Right lobe of liver (tissue), 6 donors: ENCODE measurements at regions of chr15 and their contacts with region 1.

Region 1: DNA sequence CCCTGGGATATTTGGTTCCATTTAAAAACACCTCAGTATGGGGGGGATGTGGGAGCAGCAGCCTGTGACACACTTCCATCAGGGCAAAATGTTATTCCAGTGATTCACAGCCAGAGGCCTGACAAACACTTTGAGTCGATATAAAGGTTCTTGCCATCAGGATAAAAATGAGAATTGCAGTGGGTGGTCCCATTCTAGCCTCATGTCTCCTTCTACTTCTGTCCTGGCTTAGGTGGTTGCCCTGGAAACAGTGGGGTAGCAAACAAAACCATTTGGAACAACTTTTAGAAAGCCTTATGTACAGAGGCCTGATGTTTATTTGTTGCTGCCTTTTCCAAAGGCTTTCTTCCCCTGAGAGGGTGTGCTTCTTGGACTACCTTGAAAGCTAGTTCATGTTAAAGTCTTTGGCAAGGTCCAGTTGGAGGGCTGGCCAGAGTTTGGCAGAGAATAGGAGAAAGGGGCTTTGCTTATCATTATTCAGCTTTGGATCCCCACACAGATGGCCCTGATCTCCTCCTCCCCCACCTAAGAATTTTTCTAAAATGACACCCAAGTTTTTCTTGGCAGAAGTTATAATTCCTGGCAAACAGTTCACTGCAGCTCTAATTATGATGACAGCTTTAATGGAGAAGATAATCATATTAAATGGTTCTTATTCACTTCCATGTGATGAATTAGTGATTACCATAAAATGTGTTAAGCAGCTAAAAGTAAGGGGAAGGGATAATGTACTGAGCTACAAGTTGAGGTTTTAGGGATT is 84.2 kb upstream of the ZNF280D start:
- DNase-seq: no peak
- ATAC-seq: no peak
- H3K4me3 ChIP-seq: no peak overlapping the region
- H3K27ac ChIP-seq: no peak overlapping the region
- H3K4me1 ChIP-seq: peaks cover 0 to 1% (median 0%) of the 10 kb centered on the region in 4 donors
- H3K27me3 ChIP-seq: no peaks in the 10 kb centered on the region
- CTCF ChIP-seq: no peak
- POLR2A ChIP-seq: no peak

Region 2: GRCh38 chr15:56019060-56019793 is 798.3 kb before region 1 on chr15:
- intact Hi-C with region 1: no loop called
- DNase-seq: no peak
- ATAC-seq: no peak
- H3K4me3 ChIP-seq: no peak overlapping the region
- H3K27ac ChIP-seq: no peak overlapping the region
- H3K4me1 ChIP-seq: no peaks in the 10 kb centered on the region
- H3K27me3 ChIP-seq: no peaks in the 10 kb centered on the region
- CTCF ChIP-seq: no peak
- POLR2A ChIP-seq: no peak

Region 3: GRCh38 chr15:56491110-56491722 is 326.3 kb before region 1 on chr15:
- intact Hi-C with region 1: loop called in 1 of 2 experiments (anchors 10 kb)
- DNase-seq: peak in 2 of 3 donors; percentile 56 to 68
- ATAC-seq: peak; percentile 89 to 94 (median 90)
- H3K4me3 ChIP-seq: no peak overlapping the region
- H3K27ac ChIP-seq: no peak overlapping the region
- H3K4me1 ChIP-seq: no peaks in the 10 kb centered on the region
- H3K27me3 ChIP-seq: no peaks in the 10 kb centered on the region
- CTCF ChIP-seq: peak; percentile 62 to 91 (median 88)
- POLR2A ChIP-seq: no peak

Region 4: DNA sequence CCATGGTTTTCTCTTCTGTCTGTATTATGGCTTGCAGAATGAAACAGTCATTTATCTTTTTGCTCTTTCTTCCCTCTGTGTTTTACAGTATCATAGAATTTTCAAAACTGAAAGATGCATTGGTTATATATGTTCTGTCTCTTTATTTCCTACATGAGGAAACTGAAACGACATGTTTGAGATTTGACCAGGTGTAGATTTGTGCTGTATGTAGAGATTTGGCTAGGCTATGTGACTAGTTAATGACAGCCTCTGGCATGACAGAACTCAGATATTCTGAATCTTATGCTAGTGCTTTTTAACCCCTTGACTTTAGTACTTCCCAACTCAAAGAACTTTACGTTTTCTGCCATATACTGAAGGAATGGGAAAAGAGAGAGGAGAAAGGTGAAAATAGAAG is 251.9 kb after region 1 on chr15:
- intact Hi-C with region 1: no loop called
- DNase-seq: no peak
- ATAC-seq: no peak
- H3K4me3 ChIP-seq: no peak overlapping the region
- H3K27ac ChIP-seq: no peak overlapping the region
- H3K4me1 ChIP-seq: no peaks in the 10 kb centered on the region
- H3K27me3 ChIP-seq: no peaks in the 10 kb centered on the region
- CTCF ChIP-seq: no peak
- POLR2A ChIP-seq: no peak

Region 5: GRCh38 chr15:57312318-57313133 is 495.0 kb after region 1 on chr15:
- intact Hi-C with region 1: loop called in 1 of 2 experiments (anchors 10 kb)
- DNase-seq: peak in 1 of 3 donors; percentile 35
- ATAC-seq: no peak
- H3K4me3 ChIP-seq: no peak overlapping the region
- H3K27ac ChIP-seq: no peak overlapping the region
- H3K4me1 ChIP-seq: peaks cover 0 to 3% (median under 1%) of the 10 kb centered on the region in 4 donors
- H3K27me3 ChIP-seq: no peaks in the 10 kb centered on the region
- CTCF ChIP-seq: no peak
- POLR2A ChIP-seq: no peak